ENCODE measurements at regions of chr2 and their contacts with region 1.

Region 1: GRCh38 chr2:135997380-135997779 is 12.0 kb upstream of the DARS1 start:
- DNase-seq: no peak
- ATAC-seq: peak; percentile 75
- H3K4me3 Mint-ChIP-seq: no peak overlapping the region
- H3K27ac Mint-ChIP-seq: no peak overlapping the region
- H3K4me1 Mint-ChIP-seq: peaks cover 34% of the 10 kb centered on the region
- H3K27me3 Mint-ChIP-seq: no peaks in the 10 kb centered on the region

Region 2: GRCh38 chr2:136008205-136008865 is 11.0 kb after region 1 on chr2:
- CTCF ChIA-PET with region 1: interaction called, 11 read pairs
- POLR2A ChIA-PET with region 1: interaction called, 3 read pairs
- DNase-seq: peak; percentile 90
- ATAC-seq: peak; percentile 96
- H3K4me3 Mint-ChIP-seq: peak overlapping the region; percentile 53
- H3K27ac Mint-ChIP-seq: peak overlapping the region; percentile 99
- H3K4me1 Mint-ChIP-seq: peaks cover 63% of the 10 kb centered on the region
- H3K27me3 Mint-ChIP-seq: no peaks in the 10 kb centered on the region